Activated CD4-positive, alpha-beta T cell treated with anti-CD3 and anti-CD28 coated beads for 36 hours (primary cell): ENCODE measurements at regions of chr16 and their contacts with region 1.

Region 1: DNA sequence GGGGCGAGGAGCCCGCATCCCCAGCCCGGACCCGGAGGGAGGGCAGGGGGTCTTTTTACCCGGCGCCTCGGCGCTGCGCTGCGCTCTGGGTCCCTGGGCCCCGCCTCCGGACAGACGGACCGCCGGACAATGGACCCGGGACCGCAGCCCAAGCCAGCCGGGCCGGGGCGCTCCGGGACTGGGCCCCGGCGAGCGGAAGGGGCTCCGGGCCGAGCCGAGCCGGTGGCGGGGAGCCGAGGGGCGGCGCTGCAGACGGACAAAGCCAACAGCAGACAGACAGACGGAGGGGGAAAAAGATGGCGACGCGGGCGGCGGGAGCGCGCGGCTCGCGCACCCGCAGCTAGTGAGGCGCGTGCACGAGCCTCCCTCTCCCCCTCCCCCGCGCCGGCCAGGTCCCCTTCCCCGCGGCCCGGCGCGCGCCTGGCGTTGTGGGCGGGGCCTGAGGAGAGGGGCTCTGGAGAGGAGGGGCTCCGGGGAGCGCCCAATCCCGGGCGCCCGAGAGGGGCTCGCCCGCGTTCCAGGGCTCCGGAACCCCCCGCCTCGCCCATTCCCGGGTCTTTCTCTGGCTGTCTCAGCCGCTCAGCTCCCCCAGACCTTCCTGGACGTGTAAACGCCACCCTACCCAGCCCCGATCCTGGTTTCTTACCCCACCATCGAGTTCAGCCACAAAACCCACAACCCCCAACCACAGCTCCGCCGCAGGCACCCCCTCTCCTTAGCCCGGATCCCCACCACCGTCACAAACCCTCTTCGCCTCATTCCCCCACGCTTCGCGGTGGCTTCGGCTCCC is at the start of gene ZNF821:
- DNase-seq: peak; percentile 89
- ATAC-seq: peak; percentile 66
- H3K4me3 Mint-ChIP-seq: peak within 1 kb of the TSS; percentile 84
- H3K27ac Mint-ChIP-seq: peak within 1 kb of the TSS; percentile 84
- H3K4me1 Mint-ChIP-seq: peaks cover 48% of the 10 kb centered on the region
- H3K27me3 Mint-ChIP-seq: no peaks in the 10 kb centered on the region
- total RNA-seq, gene ZNF821: 6.0 to 7.7 TPM

Region 2: DNA sequence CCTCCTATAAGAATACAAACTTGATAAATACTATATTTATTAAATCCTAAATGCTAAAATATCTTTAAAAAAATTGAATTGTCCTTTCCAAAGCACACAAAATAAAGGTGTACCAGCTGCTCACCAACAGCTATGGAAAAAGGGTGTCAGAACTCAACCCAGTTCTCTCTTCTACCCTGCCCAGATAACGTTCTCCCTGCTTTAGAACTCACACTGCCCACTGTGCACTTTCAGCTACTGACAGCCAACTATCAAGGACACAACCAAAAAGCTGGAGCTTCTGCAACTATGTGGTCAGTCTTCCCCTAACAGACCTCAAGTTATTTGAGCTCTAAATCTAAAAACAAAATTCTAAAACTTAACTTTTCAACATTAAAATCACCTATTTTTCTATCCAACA is 89.1 kb before region 1 on chr16:
- CTCF ChIA-PET with region 1: interaction called, 3 read pairs
- POLR2A ChIA-PET with region 1: no interaction called
- intact Hi-C with region 1: loop called in 1 of 2 experiments (anchors 5 kb)
- DNase-seq: no peak
- ATAC-seq: peak; percentile 60
- H3K4me3 Mint-ChIP-seq: no peak overlapping the region
- H3K27ac Mint-ChIP-seq: peak overlapping the region; percentile 34
- H3K4me1 Mint-ChIP-seq: peaks cover 63% of the 10 kb centered on the region
- H3K27me3 Mint-ChIP-seq: no peaks in the 10 kb centered on the region

Region 3: GRCh38 chr16:71845639-71846430 is 38.2 kb before region 1 on chr16 and contains the start of gene ATXN1L:
- CTCF ChIA-PET with region 1: interaction called, 12 read pairs
- POLR2A ChIA-PET with region 1: interaction called, 4 read pairs
- intact Hi-C with region 1: loop called (anchors 1 to 5 kb)
- DNase-seq: peak; percentile 95
- ATAC-seq: peak; percentile 82
- H3K4me3 Mint-ChIP-seq: peak within 1 kb of the TSS; percentile 87
- H3K27ac Mint-ChIP-seq: peak within 1 kb of the TSS; percentile 93
- H3K4me1 Mint-ChIP-seq: peaks cover 43% of the 10 kb centered on the region
- H3K27me3 Mint-ChIP-seq: no peaks in the 10 kb centered on the region
- total RNA-seq, gene ATXN1L: 15.4 to 16.9 TPM

Region 4: GRCh38 chr16:71865173-71865863 is 18.7 kb before region 1 on chr16:
- CTCF ChIA-PET with region 1: interaction called, 83 read pairs
- POLR2A ChIA-PET with region 1: interaction called, 3 read pairs
- intact Hi-C with region 1: no loop called
- DNase-seq: no peak
- ATAC-seq: peak; percentile 82
- H3K4me3 Mint-ChIP-seq: no peak overlapping the region
- H3K27ac Mint-ChIP-seq: peak overlapping the region; percentile 55
- H3K4me1 Mint-ChIP-seq: peaks cover 22% of the 10 kb centered on the region
- H3K27me3 Mint-ChIP-seq: no peaks in the 10 kb centered on the region

Region 5: DNA sequence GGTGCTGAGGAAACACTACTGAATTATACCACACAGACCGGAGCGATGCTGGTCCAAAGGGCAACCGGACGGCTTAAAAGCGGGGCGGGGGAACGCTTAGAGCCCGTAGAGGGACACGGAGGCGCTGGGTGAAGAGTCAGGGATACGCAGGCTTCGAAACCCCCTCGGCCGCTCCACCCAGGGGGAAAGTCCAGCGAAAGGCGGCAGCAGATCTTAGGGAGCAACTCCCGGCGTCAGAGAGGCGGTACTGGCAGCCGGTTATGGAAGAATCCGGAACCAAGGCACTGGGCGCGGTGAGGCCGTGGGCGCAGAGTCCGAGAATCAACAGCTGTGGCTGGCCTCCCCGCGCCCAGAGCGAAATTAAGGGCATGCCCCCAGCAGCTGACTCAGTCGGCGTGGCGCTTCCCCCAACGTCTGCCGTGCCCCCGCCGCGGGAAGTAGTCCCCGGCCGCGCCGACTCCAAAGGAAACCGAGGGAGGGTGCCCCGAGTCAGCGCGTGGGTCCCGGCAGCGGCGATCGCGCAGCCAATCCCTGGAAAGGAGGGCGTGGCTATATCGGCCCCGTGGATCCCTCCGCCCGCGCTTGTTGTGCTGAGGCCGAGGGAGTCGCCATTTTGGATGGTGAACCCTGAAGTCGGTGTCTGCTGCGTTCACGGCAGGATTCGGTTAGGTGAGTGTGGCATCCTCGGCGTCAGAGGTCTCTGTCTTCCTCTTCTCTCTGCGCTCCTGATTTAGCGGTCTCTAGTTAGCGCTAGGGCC is 11.1 kb after region 1 on chr16 and contains the start of gene IST1:
- CTCF ChIA-PET with region 1: interaction called, 41 read pairs
- POLR2A ChIA-PET with region 1: interaction called, 9 read pairs
- intact Hi-C with region 1: loop called (anchors 1 kb)
- DNase-seq: peak; percentile 99
- ATAC-seq: peak; percentile 92
- H3K4me3 Mint-ChIP-seq: peak within 1 kb of the TSS; percentile 96
- H3K27ac Mint-ChIP-seq: peak within 1 kb of the TSS; percentile 94
- H3K4me1 Mint-ChIP-seq: peaks cover 31% of the 10 kb centered on the region
- H3K27me3 Mint-ChIP-seq: no peaks in the 10 kb centered on the region
- total RNA-seq, gene IST1: 170 to 179 TPM

Region 6: GRCh38 chr16:72008424-72009216 is 124.6 kb after region 1 on chr16 and contains the start of gene DHODH:
- CTCF ChIA-PET with region 1: no interaction called
- POLR2A ChIA-PET with region 1: no interaction called
- intact Hi-C with region 1: loop called in 1 of 2 experiments (anchors 1 kb)
- DNase-seq: peak; percentile 99
- ATAC-seq: peak; percentile 99
- H3K4me3 Mint-ChIP-seq: peak within 1 kb of the TSS; percentile 94
- H3K27ac Mint-ChIP-seq: peak within 1 kb of the TSS; percentile 96
- H3K4me1 Mint-ChIP-seq: peaks cover 21% of the 10 kb centered on the region
- H3K27me3 Mint-ChIP-seq: no peaks in the 10 kb centered on the region
- total RNA-seq, gene DHODH: 15.5 to 21.4 TPM